CD4-positive, alpha-beta T cell (primary cell): ENCODE measurements at regions of chr17 and their contacts with region 1.

Region 1: GRCh38 chr17:44344939-44345453 is at the start of gene GRN:
- DNase-seq: peak; percentile 71 to 91 (median 78)
- ATAC-seq: peak; percentile 99
- H3K4me3 ChIP-seq: peak within 1 kb of the TSS; percentile 88
- H3K4me3 Mint-ChIP-seq: peak within 1 kb of the TSS; percentile 95
- H3K27ac ChIP-seq: peak within 1 kb of the TSS; percentile 13 to 57
- H3K27ac Mint-ChIP-seq: peak within 1 kb of the TSS; percentile 69
- H3K4me1 ChIP-seq: peaks cover 29% of the 10 kb centered on the region
- H3K4me1 Mint-ChIP-seq: peaks cover 19% of the 10 kb centered on the region
- H3K27me3 ChIP-seq: no peaks in the 10 kb centered on the region
- H3K27me3 Mint-ChIP-seq: peaks cover 5% of the 10 kb centered on the region
- CTCF ChIP-seq: no peak
- total RNA-seq, gene GRN: 15.3 to 16.1 TPM

Region 2: DNA sequence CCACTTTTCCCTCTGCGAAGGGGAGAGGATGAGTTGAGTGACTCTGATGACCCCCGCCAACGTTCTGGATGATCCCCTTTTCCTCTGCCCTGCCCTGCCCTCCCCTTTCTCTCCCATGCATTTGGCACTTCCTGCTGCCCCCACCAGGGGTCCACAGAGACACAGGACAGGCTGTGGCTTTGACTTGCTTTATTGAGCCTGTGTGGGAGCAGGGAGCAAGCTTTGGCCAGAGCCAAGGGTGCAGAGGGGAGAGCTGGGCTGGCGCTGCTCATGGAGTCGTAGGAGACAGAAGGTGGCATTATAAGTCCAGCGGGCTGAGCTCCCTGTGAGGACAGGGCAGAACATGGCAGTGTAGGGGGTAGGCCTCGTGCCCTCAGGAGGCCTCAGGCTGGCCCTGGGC is 404.4 kb before region 1 on chr17:
- CTCF ChIA-PET with region 1: no interaction called
- POLR2A ChIA-PET with region 1: no interaction called
- intact Hi-C with region 1: loop called in 1 of 2 experiments (anchors 5 kb)
- DNase-seq: peak in 2 of 14 experiments; percentile 29 to 39
- ATAC-seq: no peak
- H3K4me3 ChIP-seq: no peak overlapping the region
- H3K4me3 Mint-ChIP-seq: no peak overlapping the region
- H3K27ac ChIP-seq: no peak overlapping the region
- H3K27ac Mint-ChIP-seq: no peak overlapping the region
- H3K4me1 ChIP-seq: peaks cover 20% of the 10 kb centered on the region
- H3K4me1 Mint-ChIP-seq: peaks cover 18% of the 10 kb centered on the region
- H3K27me3 ChIP-seq: no peaks in the 10 kb centered on the region
- H3K27me3 Mint-ChIP-seq: peaks cover 24% of the 10 kb centered on the region
- CTCF ChIP-seq: no peak

Region 3: GRCh38 chr17:44141717-44142285 is 203.2 kb before region 1 on chr17 and contains the start of gene HROB:
- CTCF ChIA-PET with region 1: no interaction called
- POLR2A ChIA-PET with region 1: no interaction called
- intact Hi-C with region 1: loop called in 1 of 2 experiments (anchors 5 kb)
- DNase-seq: peak; percentile 95 to 100 (median 98)
- ATAC-seq: peak; percentile 93
- H3K4me3 ChIP-seq: peak within 1 kb of the TSS; percentile 59
- H3K4me3 Mint-ChIP-seq: peak within 1 kb of the TSS; percentile 84
- H3K27ac ChIP-seq: peak within 1 kb of the TSS; percentile 41 to 59
- H3K27ac Mint-ChIP-seq: peak within 1 kb of the TSS; percentile 68
- H3K4me1 ChIP-seq: peaks cover 19% of the 10 kb centered on the region
- H3K4me1 Mint-ChIP-seq: peaks cover 7% of the 10 kb centered on the region
- H3K27me3 ChIP-seq: peaks cover 8 to 12% of the 10 kb centered on the region in 2 experiments
- H3K27me3 Mint-ChIP-seq: peaks cover 17% of the 10 kb centered on the region
- CTCF ChIP-seq: peak; percentile 86
- total RNA-seq, gene HROB: 1.6 TPM

Region 4: GRCh38 chr17:44247440-44247841 is 97.6 kb before region 1 on chr17:
- CTCF ChIA-PET with region 1: no interaction called
- POLR2A ChIA-PET with region 1: no interaction called
- intact Hi-C with region 1: no loop called
- DNase-seq: no peak
- ATAC-seq: no peak
- H3K4me3 ChIP-seq: no peak overlapping the region
- H3K4me3 Mint-ChIP-seq: no peak overlapping the region
- H3K27ac ChIP-seq: no peak overlapping the region
- H3K27ac Mint-ChIP-seq: peak overlapping the region; percentile 33
- H3K4me1 ChIP-seq: peaks cover 38% of the 10 kb centered on the region
- H3K4me1 Mint-ChIP-seq: peaks cover 57% of the 10 kb centered on the region
- H3K27me3 ChIP-seq: no peaks in the 10 kb centered on the region
- H3K27me3 Mint-ChIP-seq: no peaks in the 10 kb centered on the region
- CTCF ChIP-seq: no peak

Region 5: DNA sequence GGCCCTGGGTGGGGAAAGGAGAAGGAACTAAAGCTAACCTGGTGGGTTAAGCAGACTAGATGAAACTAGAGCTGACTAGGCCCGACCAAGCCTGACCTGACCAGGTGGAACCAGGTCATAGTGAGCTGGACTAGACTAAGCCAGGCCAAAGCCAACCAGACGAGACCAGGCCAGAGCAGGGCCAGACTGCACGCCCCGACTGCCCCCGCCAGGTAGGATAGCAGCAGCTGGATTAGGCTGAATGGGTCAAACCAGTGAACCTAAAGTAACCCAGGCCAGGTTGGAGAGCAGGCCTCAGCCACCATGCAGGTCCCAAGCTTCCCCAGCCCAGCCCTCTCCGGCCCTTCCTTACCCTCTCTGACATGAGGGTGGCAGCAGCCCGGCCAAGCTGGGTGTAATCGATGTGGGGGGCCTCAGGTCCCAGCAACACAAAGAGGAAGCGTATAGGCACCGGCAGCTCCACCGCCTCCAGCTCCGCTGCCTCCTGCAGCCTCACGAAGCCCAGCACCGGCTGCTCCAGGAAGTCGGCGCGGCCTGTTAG is 86.1 kb before region 1 on chr17:
- CTCF ChIA-PET with region 1: no interaction called
- POLR2A ChIA-PET with region 1: no interaction called
- intact Hi-C with region 1: no loop called
- DNase-seq: no peak
- ATAC-seq: no peak
- H3K4me3 ChIP-seq: no peak overlapping the region
- H3K4me3 Mint-ChIP-seq: no peak overlapping the region
- H3K27ac ChIP-seq: no peak overlapping the region
- H3K27ac Mint-ChIP-seq: no peak overlapping the region
- H3K4me1 ChIP-seq: no peaks in the 10 kb centered on the region
- H3K4me1 Mint-ChIP-seq: no peaks in the 10 kb centered on the region
- H3K27me3 ChIP-seq: no peaks in the 10 kb centered on the region
- H3K27me3 Mint-ChIP-seq: no peaks in the 10 kb centered on the region
- CTCF ChIP-seq: no peak

Region 6: DNA sequence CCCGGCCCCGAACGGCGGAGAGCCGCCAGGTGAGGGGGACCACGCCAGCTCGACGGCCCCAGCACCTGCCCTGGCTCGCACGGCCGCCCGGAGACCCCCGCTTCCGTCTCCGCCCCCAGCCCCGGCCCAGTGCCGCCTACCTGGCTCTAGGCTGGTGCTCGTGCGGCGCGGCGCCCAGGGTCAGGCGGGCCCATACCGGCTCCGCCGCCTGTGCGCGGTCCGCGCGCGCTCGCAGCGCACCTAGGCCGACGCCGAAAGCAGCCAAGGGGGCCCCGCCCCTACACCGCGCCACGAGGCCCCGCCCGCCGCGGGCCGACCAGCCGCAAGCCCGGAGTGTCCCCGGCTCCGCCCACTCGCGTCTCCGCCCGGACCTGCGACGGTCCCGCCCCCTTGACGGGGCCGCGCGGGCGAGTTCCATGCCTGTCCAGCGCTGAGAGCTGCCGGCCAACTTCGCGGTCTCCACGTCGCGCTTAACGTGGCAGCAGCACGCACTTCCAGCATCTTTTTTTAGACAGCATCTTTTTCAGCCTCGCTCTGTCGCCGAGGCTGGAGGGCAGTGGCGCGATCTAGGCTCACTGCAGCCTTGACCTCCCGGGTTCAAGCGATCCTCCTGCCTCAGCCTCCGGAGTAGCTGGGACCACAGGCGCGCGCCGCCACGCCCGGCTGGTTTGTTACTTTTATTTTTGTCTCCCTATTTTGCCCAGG is 20.3 kb before region 1 on chr17 and contains the start of gene SLC25A39:
- CTCF ChIA-PET with region 1: interaction called, 4 read pairs
- POLR2A ChIA-PET with region 1: interaction called, 16 read pairs
- intact Hi-C with region 1: loop called in 1 of 2 experiments (anchors 2 kb)
- DNase-seq: peak; percentile 87 to 97 (median 94)
- ATAC-seq: peak; percentile 69
- H3K4me3 ChIP-seq: peak within 1 kb of the TSS; percentile 85
- H3K4me3 Mint-ChIP-seq: peak within 1 kb of the TSS; percentile 95
- H3K27ac ChIP-seq: peak within 1 kb of the TSS; percentile 83 to 90
- H3K27ac Mint-ChIP-seq: peak within 1 kb of the TSS; percentile 96
- H3K4me1 ChIP-seq: peaks cover 44% of the 10 kb centered on the region
- H3K4me1 Mint-ChIP-seq: peaks cover 27% of the 10 kb centered on the region
- H3K27me3 ChIP-seq: no peaks in the 10 kb centered on the region
- H3K27me3 Mint-ChIP-seq: no peaks in the 10 kb centered on the region
- CTCF ChIP-seq: no peak
- total RNA-seq, gene SLC25A39: 55.5 to 65.5 TPM

Region 7: GRCh38 chr17:44363613-44364159 is 18.7 kb after region 1 on chr17 and contains the start of gene FAM171A2:
- CTCF ChIA-PET with region 1: interaction called, 10 read pairs
- POLR2A ChIA-PET with region 1: interaction called, 7 read pairs
- intact Hi-C with region 1: no loop called
- DNase-seq: peak; percentile 36 to 89 (median 64)
- ATAC-seq: peak; percentile 93
- H3K4me3 ChIP-seq: peak within 1 kb of the TSS; percentile 54
- H3K4me3 Mint-ChIP-seq: peak within 1 kb of the TSS; percentile 85
- H3K27ac ChIP-seq: no peak within 1 kb of the TSS
- H3K27ac Mint-ChIP-seq: no peak within 1 kb of the TSS
- H3K4me1 ChIP-seq: peaks cover 13% of the 10 kb centered on the region
- H3K4me1 Mint-ChIP-seq: peaks cover 7% of the 10 kb centered on the region
- H3K27me3 ChIP-seq: peaks cover 21 to 22% of the 10 kb centered on the region in 2 experiments
- H3K27me3 Mint-ChIP-seq: peaks cover 50% of the 10 kb centered on the region
- CTCF ChIP-seq: peak; percentile 35
- total RNA-seq, gene FAM171A2: 0.08 to 0.19 TPM